Naive thymus-derived CD4-positive, alpha-beta T cell (primary cell): ENCODE measurements at regions of chr6 and their contacts with region 1.

Region 1: DNA sequence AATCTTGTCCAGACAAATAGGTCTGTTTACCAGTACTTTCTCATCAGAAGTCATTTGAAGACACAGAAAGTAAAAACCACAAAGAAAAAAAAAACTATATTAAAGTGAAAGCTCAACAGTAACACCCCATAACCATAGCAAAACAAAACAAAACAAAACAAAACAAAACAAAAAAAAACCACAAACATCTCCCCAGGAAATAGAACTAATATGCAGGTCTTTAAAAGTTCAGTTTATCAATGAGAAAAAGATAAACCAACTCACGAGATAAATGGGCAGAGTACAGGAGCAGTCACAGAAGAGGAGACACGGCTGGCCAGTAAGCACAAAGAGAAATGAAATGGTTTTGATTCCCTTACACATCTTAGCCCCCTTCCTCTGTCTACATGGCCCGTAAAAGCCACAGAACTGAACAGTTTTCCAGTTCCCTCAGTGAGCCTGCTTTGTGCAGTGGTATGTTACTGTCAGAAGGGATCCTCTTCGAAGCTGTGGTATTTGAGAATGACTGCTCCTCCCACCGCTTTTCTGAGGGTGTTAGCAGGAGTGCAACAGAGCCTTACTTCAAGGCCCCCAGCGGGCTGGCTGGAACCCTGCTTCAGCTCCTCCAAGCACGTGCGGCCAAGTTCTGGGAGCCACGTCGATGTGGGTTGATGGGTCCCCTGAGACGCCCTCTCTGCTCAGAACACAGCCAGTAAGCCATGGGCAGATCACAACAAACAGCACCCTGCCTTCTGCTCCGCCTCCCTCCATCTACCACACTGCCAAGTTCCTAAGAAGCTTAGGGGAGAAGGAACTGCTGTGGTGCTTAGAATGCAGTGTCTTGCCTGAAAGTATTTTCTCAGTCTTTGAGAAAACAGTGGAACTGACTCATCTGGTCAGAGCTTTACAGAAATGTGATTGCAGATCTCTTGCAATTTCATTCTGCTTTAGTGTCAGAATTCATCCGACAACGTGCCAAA is 14.0 kb downstream of the UST start:
- DNase-seq: peak in 8 of 9 donors; percentile 21 to 57 (median 28)
- ATAC-seq: peak; percentile 58
- H3K4me3 ChIP-seq: peak overlapping the region; percentile 46
- H3K4me3 Mint-ChIP-seq: peak overlapping the region; percentile 62 to 94 (median 81)
- H3K27ac ChIP-seq: peak overlapping the region; percentile 53
- H3K27ac Mint-ChIP-seq: peak overlapping the region; percentile 20 to 87 (median 81)
- H3K4me1 ChIP-seq: peaks cover 17 to 54% of the 10 kb centered on the region in 2 donors
- H3K4me1 Mint-ChIP-seq: peaks cover 20 to 52% (median 35%) of the 10 kb centered on the region in 7 donors
- H3K27me3 ChIP-seq: no peaks in the 10 kb centered on the region
- H3K27me3 Mint-ChIP-seq: peaks cover 8 to 76% (median 23%) of the 10 kb centered on the region in 5 donors

Region 2: DNA sequence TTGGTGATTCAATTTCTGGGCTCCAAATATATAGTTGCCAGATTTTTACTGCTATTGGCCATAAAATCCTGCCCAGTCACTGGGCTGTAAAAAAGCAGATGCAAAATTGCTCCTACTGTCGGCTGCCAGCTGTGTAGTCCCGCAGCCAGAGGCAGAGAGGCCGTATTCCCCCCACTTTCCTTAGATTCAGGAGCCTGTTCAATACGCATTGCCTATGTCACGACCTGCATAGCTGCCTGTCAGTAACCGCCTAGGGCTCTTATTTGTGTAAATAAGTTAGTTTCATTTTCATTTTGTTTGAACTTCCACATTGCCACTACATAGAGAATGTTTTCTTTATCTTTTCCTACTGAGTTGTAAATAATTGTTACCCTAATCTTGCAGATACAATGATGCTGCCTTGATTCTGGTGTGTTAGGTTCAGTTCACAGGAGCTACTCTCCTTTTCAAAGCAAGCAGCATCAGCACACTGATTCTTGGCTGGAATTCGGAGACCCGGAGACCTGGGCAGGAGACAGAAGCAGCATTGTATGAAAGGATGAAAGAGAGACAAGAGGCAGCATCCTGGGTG is 60.0 kb before region 1 on chr6:
- CTCF ChIA-PET with region 1: no interaction called
- POLR2A ChIA-PET with region 1: no interaction called
- intact Hi-C with region 1: loop called in 1 of 2 experiments (anchors 5 kb)
- DNase-seq: peak in 1 of 9 donors; percentile 8
- ATAC-seq: peak; percentile 56
- H3K4me3 ChIP-seq: peak overlapping the region; percentile 6
- H3K4me3 Mint-ChIP-seq: peak overlapping the region in 8 of 10 donors; percentile 56 to 90 (median 68)
- H3K27ac ChIP-seq: no peak overlapping the region
- H3K27ac Mint-ChIP-seq: peak overlapping the region in 2 of 9 donors; percentile 4 to 85
- H3K4me1 ChIP-seq: peaks cover 5 to 11% of the 10 kb centered on the region in 2 donors
- H3K4me1 Mint-ChIP-seq: peaks cover 7 to 10% (median 9%) of the 10 kb centered on the region in 7 donors
- H3K27me3 ChIP-seq: no peaks in the 10 kb centered on the region
- H3K27me3 Mint-ChIP-seq: peaks cover 0 to 34% (median 20%) of the 10 kb centered on the region in 5 donors